Naive thymus-derived CD4-positive, alpha-beta T cell (primary cell): ENCODE measurements at regions of chr11 and their contacts with region 1.

Region 1: GRCh38 chr11:35165423-35166368 is 26.7 kb downstream of the CD44 start:
- DNase-seq: peak; percentile 39 to 99 (median 98)
- ATAC-seq: peak; percentile 81
- H3K4me3 ChIP-seq: peak overlapping the region; percentile 49
- H3K4me3 Mint-ChIP-seq: peak overlapping the region; percentile 69 to 94 (median 85)
- H3K27ac ChIP-seq: peak overlapping the region; percentile 94
- H3K27ac Mint-ChIP-seq: peak overlapping the region; percentile 89 to 100 (median 100)
- H3K4me1 ChIP-seq: peaks cover 96% of the 10 kb centered on the region in 2 donors
- H3K4me1 Mint-ChIP-seq: peaks cover 66 to 100% (median 100%) of the 10 kb centered on the region in 7 donors
- H3K27me3 ChIP-seq: no peaks in the 10 kb centered on the region
- H3K27me3 Mint-ChIP-seq: no peaks in the 10 kb centered on the region

Region 2: DNA sequence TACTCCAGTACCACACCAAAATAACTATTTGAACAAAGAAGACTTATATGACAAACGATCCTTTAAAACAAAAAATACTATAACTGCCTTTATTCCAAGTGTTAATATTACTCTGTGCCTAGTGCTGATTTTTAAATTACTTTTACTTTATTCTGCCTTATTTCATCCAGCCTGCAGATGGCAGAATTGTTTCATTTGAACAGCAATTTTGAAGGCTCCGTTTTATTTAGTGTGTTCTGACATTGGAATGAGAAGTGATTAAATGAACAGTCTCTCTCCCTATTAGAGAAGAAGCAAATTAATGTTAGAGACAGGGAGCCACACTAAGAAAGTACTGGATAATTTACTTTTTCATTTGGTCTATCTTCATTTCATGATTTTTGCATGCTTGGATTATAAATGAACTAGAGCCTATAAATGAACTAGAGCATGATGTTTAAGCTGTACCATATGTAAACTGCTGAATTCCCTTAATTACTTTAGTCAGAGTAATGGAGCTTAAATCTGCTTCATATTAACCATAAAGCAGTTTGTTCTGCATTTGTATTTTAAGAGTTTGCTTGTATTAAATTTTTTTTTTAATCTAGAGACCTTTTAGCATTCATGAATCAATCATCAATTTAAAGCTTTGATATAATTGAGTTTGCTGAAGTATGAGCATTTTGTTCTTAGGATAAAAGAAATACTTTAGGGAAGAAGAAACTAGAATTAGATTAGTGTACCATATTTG is 239.4 kb before region 1 on chr11:
- CTCF ChIA-PET with region 1: interaction called, 3 read pairs
- POLR2A ChIA-PET with region 1: no interaction called
- intact Hi-C with region 1: loop called (anchors 1 kb)
- DNase-seq: peak in 7 of 9 donors; percentile 18 to 61 (median 58)
- ATAC-seq: peak; percentile 80
- H3K4me3 ChIP-seq: no peak overlapping the region
- H3K4me3 Mint-ChIP-seq: no peak overlapping the region
- H3K27ac ChIP-seq: no peak overlapping the region
- H3K27ac Mint-ChIP-seq: peak overlapping the region in 1 of 9 donors; percentile 49
- H3K4me1 ChIP-seq: peaks cover 0 to 10% of the 10 kb centered on the region in 2 donors
- H3K4me1 Mint-ChIP-seq: peaks cover 10 to 54% (median 29%) of the 10 kb centered on the region in 7 donors
- H3K27me3 ChIP-seq: no peaks in the 10 kb centered on the region
- H3K27me3 Mint-ChIP-seq: no peaks in the 10 kb centered on the region

Region 3: DNA sequence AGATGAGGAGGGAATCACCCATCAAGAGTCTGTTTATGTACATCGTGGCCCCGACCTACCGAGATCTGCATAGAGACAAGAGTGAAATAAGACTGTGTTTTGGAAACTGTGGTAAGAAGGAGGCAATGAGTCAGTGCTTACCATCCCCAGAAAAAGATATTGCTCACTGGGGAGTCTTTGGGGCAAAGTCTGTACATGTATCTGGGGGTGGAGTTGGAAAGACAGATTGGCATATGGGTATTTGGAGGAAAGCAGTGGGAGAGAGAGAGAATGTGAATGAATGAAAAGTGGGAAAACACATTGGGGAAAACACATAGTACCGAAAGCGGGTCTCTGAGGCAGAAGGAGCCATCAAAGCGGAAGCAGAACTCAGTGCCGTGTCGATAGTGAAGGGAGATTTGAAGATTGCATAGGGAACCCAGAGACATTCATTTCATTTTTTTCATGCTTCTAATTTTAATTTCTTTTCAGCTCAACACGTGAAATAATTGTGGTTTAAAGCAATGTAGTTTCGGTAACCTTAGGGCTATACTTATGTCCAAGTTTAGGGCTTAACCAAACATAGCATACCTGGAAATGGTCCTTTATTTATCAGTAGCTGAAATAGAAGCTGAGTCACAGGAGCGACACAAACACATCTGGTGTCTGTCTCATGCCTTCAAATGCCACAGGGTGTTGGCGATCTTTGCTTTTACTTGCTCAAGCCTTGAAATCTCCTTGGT is 125.3 kb before region 1 on chr11:
- CTCF ChIA-PET with region 1: interaction called, 3 read pairs
- POLR2A ChIA-PET with region 1: interaction called, 29 read pairs
- intact Hi-C with region 1: loop called (anchors 1 kb)
- DNase-seq: peak in 8 of 9 donors; percentile 53 to 89 (median 74)
- ATAC-seq: peak; percentile 88
- H3K4me3 ChIP-seq: peak overlapping the region; percentile 60
- H3K4me3 Mint-ChIP-seq: peak overlapping the region; percentile 74 to 94 (median 89)
- H3K27ac ChIP-seq: peak overlapping the region; percentile 86
- H3K27ac Mint-ChIP-seq: peak overlapping the region; percentile 90 to 99 (median 97)
- H3K4me1 ChIP-seq: peaks cover 29 to 45% of the 10 kb centered on the region in 2 donors
- H3K4me1 Mint-ChIP-seq: peaks cover 28 to 77% (median 68%) of the 10 kb centered on the region in 7 donors
- H3K27me3 ChIP-seq: no peaks in the 10 kb centered on the region
- H3K27me3 Mint-ChIP-seq: peaks cover 0 to 29% (median 0%) of the 10 kb centered on the region in 5 donors

Region 4: DNA sequence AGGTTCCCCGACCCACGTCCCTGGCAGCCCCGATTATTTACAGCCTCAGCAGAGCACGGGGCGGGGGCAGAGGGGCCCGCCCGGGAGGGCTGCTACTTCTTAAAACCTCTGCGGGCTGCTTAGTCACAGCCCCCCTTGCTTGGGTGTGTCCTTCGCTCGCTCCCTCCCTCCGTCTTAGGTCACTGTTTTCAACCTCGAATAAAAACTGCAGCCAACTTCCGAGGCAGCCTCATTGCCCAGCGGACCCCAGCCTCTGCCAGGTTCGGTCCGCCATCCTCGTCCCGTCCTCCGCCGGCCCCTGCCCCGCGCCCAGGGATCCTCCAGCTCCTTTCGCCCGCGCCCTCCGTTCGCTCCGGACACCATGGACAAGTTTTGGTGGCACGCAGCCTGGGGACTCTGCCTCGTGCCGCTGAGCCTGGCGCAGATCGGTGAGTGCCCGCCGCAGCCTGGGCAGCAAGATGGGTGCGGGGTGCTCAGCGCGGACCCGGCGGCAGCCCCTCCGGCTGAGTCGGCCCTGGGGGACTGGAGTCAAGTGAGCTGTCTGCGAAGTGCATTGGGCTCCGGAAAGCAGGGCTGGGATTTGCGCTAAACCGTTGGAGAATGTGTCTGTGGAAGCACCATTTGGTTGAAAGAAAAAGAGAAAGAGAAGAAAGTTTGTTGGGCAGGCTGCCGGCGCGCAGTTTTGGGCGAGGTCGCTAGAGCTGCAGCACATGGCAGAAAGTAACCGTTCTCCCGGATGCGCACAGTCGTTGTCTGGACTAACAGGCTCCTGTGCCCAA is 26.6 kb before region 1 on chr11 and contains the start of gene CD44:
- CTCF ChIA-PET with region 1: interaction called, 12 read pairs
- POLR2A ChIA-PET with region 1: interaction called, 185 read pairs
- intact Hi-C with region 1: loop called (anchors 1 kb)
- DNase-seq: peak; percentile 65 to 87 (median 73)
- ATAC-seq: peak; percentile 90
- H3K4me3 ChIP-seq: peak within 1 kb of the TSS; percentile 97
- H3K4me3 Mint-ChIP-seq: peak within 1 kb of the TSS; percentile 90 to 100 (median 96)
- H3K27ac ChIP-seq: peak within 1 kb of the TSS; percentile 88
- H3K27ac Mint-ChIP-seq: peak within 1 kb of the TSS; percentile 79 to 100 (median 95)
- H3K4me1 ChIP-seq: peaks cover 33 to 37% of the 10 kb centered on the region in 2 donors
- H3K4me1 Mint-ChIP-seq: peaks cover 43 to 60% (median 50%) of the 10 kb centered on the region in 7 donors
- H3K27me3 ChIP-seq: no peaks in the 10 kb centered on the region
- H3K27me3 Mint-ChIP-seq: peaks cover 0 to 8% (median 0%) of the 10 kb centered on the region in 5 donors
- total RNA-seq, gene CD44: 369 to 1,223 (median 784) TPM

Region 5: GRCh38 chr11:35214792-35215193 is 49.1 kb after region 1 on chr11:
- CTCF ChIA-PET with region 1: no interaction called
- POLR2A ChIA-PET with region 1: interaction called, 6 read pairs
- intact Hi-C with region 1: loop called in 1 of 2 experiments (anchors 1 kb)
- DNase-seq: no peak
- ATAC-seq: peak; percentile 71
- H3K4me3 ChIP-seq: no peak overlapping the region
- H3K4me3 Mint-ChIP-seq: peak overlapping the region in 7 of 10 donors; percentile 12 to 68 (median 44)
- H3K27ac ChIP-seq: peak overlapping the region; percentile 11
- H3K27ac Mint-ChIP-seq: peak overlapping the region; percentile 26 to 98 (median 92)
- H3K4me1 ChIP-seq: peaks cover 40 to 41% of the 10 kb centered on the region in 2 donors
- H3K4me1 Mint-ChIP-seq: peaks cover 41 to 97% (median 89%) of the 10 kb centered on the region in 7 donors
- H3K27me3 ChIP-seq: no peaks in the 10 kb centered on the region
- H3K27me3 Mint-ChIP-seq: no peaks in the 10 kb centered on the region

Region 6: GRCh38 chr11:35305670-35306382 is 140.1 kb after region 1 on chr11:
- CTCF ChIA-PET with region 1: interaction called, 30 read pairs
- POLR2A ChIA-PET with region 1: interaction called, 5 read pairs
- intact Hi-C with region 1: loop called in 1 of 2 experiments (anchors 1 kb)
- DNase-seq: peak in 7 of 9 donors; percentile 20 to 57 (median 53)
- ATAC-seq: peak; percentile 55
- H3K4me3 ChIP-seq: no peak overlapping the region
- H3K4me3 Mint-ChIP-seq: peak overlapping the region; percentile 6 to 84 (median 77)
- H3K27ac ChIP-seq: peak overlapping the region; percentile 16
- H3K27ac Mint-ChIP-seq: peak overlapping the region; percentile 19 to 96 (median 86)
- H3K4me1 ChIP-seq: peaks cover 0 to 14% of the 10 kb centered on the region in 2 donors
- H3K4me1 Mint-ChIP-seq: peaks cover 16 to 42% (median 31%) of the 10 kb centered on the region in 7 donors
- H3K27me3 ChIP-seq: no peaks in the 10 kb centered on the region
- H3K27me3 Mint-ChIP-seq: peaks cover 0 to 14% (median 0%) of the 10 kb centered on the region in 5 donors

Region 7: GRCh38 chr11:35391922-35392813 is 226.5 kb after region 1 on chr11:
- CTCF ChIA-PET with region 1: interaction called, 6 read pairs
- POLR2A ChIA-PET with region 1: interaction called, 3 read pairs
- intact Hi-C with region 1: loop called (anchors 1 to 5 kb)
- DNase-seq: peak; percentile 70 to 93 (median 82)
- ATAC-seq: peak; percentile 93
- H3K4me3 ChIP-seq: no peak overlapping the region
- H3K4me3 Mint-ChIP-seq: peak overlapping the region; percentile 13 to 78 (median 63)
- H3K27ac ChIP-seq: no peak overlapping the region
- H3K27ac Mint-ChIP-seq: peak overlapping the region in 6 of 9 donors; percentile 25 to 86 (median 59)
- H3K4me1 ChIP-seq: peaks cover 0 to 17% of the 10 kb centered on the region in 2 donors
- H3K4me1 Mint-ChIP-seq: peaks cover 8 to 35% (median 30%) of the 10 kb centered on the region in 7 donors
- H3K27me3 ChIP-seq: no peaks in the 10 kb centered on the region
- H3K27me3 Mint-ChIP-seq: peaks cover 0 to 19% (median 0%) of the 10 kb centered on the region in 5 donors